CD8-positive, alpha-beta T cell (primary cell): ENCODE measurements at regions of chr12 and their contacts with region 1.

Region 1: DNA sequence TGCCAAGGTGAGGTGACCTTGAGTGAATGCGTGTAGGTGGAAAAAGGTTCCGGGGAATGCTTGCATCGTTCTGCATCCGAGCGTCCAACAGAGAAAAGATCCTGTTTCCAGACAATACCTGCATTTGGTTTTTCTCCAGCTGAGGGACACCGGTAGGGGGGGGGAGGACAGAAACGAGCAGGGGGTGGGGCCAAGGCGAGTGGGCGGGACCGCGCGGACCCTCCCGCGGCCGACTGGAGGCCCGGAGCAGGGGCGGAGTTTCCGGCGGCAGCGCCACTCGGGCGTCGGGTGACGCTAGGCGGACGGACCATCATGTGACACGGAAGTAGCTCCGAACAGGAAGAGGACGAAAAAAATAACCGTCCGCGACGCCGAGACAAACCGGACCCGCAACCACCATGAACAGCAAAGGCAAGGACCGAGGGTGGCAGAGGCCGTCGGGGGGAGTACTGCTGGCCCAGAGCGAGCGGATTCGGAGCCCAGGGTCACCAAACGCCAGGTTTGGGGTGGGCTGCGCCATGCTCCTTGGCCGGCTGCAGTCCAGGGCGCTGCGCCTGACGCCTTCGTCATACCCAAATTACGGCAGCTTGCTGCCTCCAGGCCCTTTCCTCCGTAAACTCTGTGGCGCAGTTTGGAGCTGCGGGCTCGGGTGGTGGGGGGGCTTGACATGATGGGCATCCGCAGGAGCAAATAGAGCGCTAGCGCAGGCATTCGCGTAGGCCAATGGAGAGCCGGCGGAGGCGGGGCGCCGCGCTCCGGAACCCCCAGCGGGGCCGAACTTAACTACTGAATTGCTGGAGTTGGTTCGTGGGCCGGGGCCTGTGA is at the start of gene DAZAP2:
- DNase-seq: peak; percentile 89 to 98 (median 96)
- ATAC-seq: peak; percentile 88
- H3K4me3 ChIP-seq: peak within 1 kb of the TSS; percentile 80 to 99
- H3K4me3 Mint-ChIP-seq: peak within 1 kb of the TSS; percentile 94
- H3K27ac ChIP-seq: peak within 1 kb of the TSS; percentile 97 to 100
- H3K27ac Mint-ChIP-seq: peak within 1 kb of the TSS; percentile 100
- H3K4me1 ChIP-seq: peaks cover 32% of the 10 kb centered on the region
- H3K4me1 Mint-ChIP-seq: peaks cover 45% of the 10 kb centered on the region
- H3K27me3 ChIP-seq: no peaks in the 10 kb centered on the region
- H3K27me3 Mint-ChIP-seq: no peaks in the 10 kb centered on the region
- CTCF ChIP-seq: no peak
- total RNA-seq, gene DAZAP2: 340 to 343 TPM

Region 2: DNA sequence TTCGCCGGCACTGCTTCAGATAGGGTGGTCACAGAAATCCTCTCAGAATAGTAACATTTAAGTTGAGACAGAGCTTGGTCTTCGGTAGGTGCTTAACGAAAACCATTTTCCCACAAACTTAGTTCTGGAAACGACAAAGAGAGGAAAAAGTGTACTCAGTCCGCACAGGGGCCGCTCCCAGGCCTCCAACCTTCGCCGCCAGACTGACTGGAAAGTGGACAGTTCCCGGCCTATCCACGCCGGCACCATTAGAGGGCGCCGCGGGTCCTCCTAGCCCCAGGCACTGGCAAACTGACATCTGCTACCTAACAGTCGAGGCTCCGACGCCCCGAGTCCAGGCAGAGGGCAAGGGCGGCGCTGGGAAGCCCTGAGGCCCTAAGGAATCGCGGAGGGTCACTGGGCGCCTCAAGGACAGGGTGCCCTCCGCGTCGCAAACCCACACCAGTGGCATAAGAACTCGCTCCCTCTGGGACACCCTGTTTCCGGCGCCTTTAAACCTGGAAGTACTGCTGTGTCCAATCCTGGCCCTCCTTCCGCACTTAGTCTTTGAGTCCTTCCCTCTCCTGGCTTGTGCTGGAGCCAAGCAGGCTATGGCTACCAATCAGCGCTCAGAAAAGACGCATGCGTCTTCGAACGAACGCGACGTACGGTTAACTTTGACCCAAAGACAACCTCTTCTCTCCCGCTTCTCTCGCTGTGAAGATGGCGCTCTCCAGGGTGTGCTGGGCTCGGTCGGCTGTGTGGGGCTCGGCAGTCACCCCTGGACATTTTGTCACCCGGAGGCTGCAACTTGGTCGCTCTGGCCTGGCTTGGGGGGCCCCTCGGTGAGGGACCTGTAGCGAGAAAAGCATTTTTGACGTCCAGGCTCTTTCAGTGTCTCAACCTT is 190.8 kb before region 1 on chr12 and contains the start of gene LETMD1:
- CTCF ChIA-PET with region 1: interaction called, 3 read pairs
- POLR2A ChIA-PET with region 1: no interaction called
- intact Hi-C with region 1: loop called (anchors 1 kb)
- DNase-seq: peak; percentile 83 to 99 (median 88)
- ATAC-seq: peak; percentile 94
- H3K4me3 ChIP-seq: peak within 1 kb of the TSS; percentile 79 to 83
- H3K4me3 Mint-ChIP-seq: peak within 1 kb of the TSS; percentile 98
- H3K27ac ChIP-seq: peak within 1 kb of the TSS; percentile 74 to 96
- H3K27ac Mint-ChIP-seq: peak within 1 kb of the TSS; percentile 97
- H3K4me1 ChIP-seq: peaks cover 23% of the 10 kb centered on the region
- H3K4me1 Mint-ChIP-seq: peaks cover 34% of the 10 kb centered on the region
- H3K27me3 ChIP-seq: no peaks in the 10 kb centered on the region
- H3K27me3 Mint-ChIP-seq: no peaks in the 10 kb centered on the region
- CTCF ChIP-seq: peak; percentile 95
- total RNA-seq, gene LETMD1: 51.3 to 55.2 TPM

Region 3: GRCh38 chr12:51083126-51083833 is 155.4 kb before region 1 on chr12 and contains the start of gene CSRNP2:
- CTCF ChIA-PET with region 1: no interaction called
- POLR2A ChIA-PET with region 1: interaction called, 5 read pairs
- intact Hi-C with region 1: loop called (anchors 1 kb)
- DNase-seq: peak; percentile 90 to 97 (median 94)
- ATAC-seq: peak; percentile 99
- H3K4me3 ChIP-seq: peak within 1 kb of the TSS; percentile 88
- H3K4me3 Mint-ChIP-seq: peak within 1 kb of the TSS; percentile 94
- H3K27ac ChIP-seq: peak within 1 kb of the TSS; percentile 61 to 62
- H3K27ac Mint-ChIP-seq: peak within 1 kb of the TSS; percentile 91
- H3K4me1 ChIP-seq: peaks cover 12% of the 10 kb centered on the region
- H3K4me1 Mint-ChIP-seq: peaks cover 36% of the 10 kb centered on the region
- H3K27me3 ChIP-seq: no peaks in the 10 kb centered on the region
- H3K27me3 Mint-ChIP-seq: no peaks in the 10 kb centered on the region
- CTCF ChIP-seq: no peak
- total RNA-seq, gene CSRNP2: 19.5 to 19.9 TPM

Region 4: GRCh38 chr12:51253276-51253675 is 14.6 kb after region 1 on chr12:
- CTCF ChIA-PET with region 1: interaction called, 7 read pairs
- POLR2A ChIA-PET with region 1: interaction called, 20 read pairs
- intact Hi-C with region 1: no loop called
- DNase-seq: no peak
- ATAC-seq: no peak
- H3K4me3 ChIP-seq: no peak overlapping the region
- H3K4me3 Mint-ChIP-seq: no peak overlapping the region
- H3K27ac ChIP-seq: no peak overlapping the region
- H3K27ac Mint-ChIP-seq: no peak overlapping the region
- H3K4me1 ChIP-seq: peaks cover 3% of the 10 kb centered on the region
- H3K4me1 Mint-ChIP-seq: peaks cover 8% of the 10 kb centered on the region
- H3K27me3 ChIP-seq: no peaks in the 10 kb centered on the region
- H3K27me3 Mint-ChIP-seq: no peaks in the 10 kb centered on the region
- CTCF ChIP-seq: no peak

Region 5: DNA sequence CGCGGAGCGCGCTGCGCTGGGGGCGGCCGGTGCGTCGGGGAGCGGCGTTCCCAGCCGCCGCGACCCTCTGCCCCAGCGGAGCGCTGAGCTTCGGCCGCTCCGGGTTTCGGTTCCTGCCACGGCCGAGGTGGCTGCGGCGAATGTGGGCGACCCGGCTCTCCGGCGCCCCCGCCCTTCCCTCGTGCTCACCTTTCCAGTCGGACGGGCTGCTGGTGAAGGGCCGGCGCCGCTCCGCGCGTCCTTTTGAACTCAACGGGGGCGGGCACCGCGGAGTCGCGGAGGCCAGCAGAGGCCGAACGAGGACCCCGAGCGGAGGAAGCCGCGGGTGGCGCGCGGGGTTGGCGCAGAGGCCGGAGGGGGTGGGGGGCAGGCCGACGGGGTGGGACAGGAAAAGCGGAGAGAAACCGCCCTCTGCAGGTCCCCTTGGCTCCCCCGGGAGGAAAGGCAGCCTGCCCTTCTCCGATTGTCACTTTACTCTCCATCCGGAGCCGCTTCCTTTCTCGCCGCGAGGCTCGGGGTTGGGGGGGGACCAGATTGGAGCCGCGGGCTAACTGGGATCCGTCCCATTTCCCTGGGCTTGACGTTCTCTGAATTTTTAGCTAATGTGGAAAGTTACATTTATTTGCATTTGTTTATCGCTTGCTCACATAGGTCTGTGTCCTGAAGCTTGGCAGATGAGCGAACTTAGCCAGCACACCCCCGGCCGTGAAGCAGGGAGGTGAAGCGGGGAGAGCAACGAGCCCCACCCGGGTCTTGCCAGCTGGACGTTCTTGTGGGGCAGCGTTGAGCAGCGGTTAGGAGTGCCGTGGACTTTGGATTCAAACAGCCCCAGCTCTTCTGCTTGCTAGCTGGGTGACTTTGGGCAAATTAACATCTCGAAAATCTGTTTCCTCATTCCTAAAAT is 31.6 kb after region 1 on chr12 and contains the start of gene SMAGP:
- CTCF ChIA-PET with region 1: no interaction called
- POLR2A ChIA-PET with region 1: interaction called, 7 read pairs
- intact Hi-C with region 1: loop called in 1 of 2 experiments (anchors 2 kb)
- DNase-seq: peak in 8 of 9 experiments; percentile 28 to 76 (median 52)
- ATAC-seq: peak; percentile 50
- H3K4me3 ChIP-seq: peak within 1 kb of the TSS; percentile 54 to 71
- H3K4me3 Mint-ChIP-seq: peak within 1 kb of the TSS; percentile 90
- H3K27ac ChIP-seq: peak within 1 kb of the TSS; percentile 42 to 58
- H3K27ac Mint-ChIP-seq: peak within 1 kb of the TSS; percentile 84
- H3K4me1 ChIP-seq: peaks cover 16% of the 10 kb centered on the region
- H3K4me1 Mint-ChIP-seq: peaks cover 23% of the 10 kb centered on the region
- H3K27me3 ChIP-seq: no peaks in the 10 kb centered on the region
- H3K27me3 Mint-ChIP-seq: no peaks in the 10 kb centered on the region
- CTCF ChIP-seq: no peak
- total RNA-seq, gene SMAGP: 1.9 to 2.3 TPM

Region 6: DNA sequence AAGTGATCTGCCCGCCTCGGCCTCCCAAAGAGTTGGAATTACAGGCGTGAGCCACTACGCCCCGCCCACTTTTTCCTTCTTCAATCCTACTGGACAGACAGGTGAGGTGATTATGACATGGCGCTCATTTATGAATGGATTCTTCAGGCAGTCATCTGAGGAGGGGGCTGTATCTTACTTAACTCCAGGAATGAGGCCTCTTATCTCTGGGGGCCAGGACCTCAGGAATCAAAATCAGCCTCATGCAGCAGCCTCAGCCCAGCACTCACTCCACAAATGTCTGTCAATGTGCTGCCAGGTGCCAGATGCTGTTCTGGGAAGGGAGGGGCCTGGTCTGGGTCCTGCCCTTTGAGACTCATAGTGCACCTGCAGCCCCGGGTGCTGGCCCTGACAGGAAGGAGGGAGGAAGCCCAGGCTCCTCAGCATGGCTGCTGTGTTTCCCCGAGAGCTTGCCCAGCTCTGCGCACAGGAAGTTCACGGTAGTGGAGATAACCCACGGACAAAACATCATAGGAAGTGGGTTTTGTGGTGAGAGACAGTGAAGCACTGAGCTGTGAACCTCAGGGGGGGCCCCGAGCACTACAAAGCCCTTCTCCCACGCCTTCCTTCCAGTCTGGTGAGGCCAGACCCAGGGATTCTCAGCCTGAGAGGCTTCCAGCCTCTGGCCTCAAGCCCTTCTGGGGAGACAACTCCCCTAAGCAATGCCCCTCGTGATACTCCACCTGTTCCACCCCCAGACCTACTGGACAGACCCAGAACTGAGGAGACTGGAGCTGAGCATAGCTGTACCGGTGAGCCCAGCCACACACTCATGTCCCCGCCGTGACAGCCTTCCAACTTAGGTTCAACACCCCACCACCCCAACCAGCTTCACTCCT is 130.2 kb after region 1 on chr12:
- CTCF ChIA-PET with region 1: interaction called, 3 read pairs
- POLR2A ChIA-PET with region 1: interaction called, 8 read pairs
- intact Hi-C with region 1: loop called in 1 of 2 experiments (anchors 1 kb)
- DNase-seq: peak; percentile 78 to 98 (median 88)
- ATAC-seq: peak; percentile 93
- H3K4me3 ChIP-seq: peak overlapping the region; percentile 38 to 49
- H3K4me3 Mint-ChIP-seq: peak overlapping the region; percentile 63
- H3K27ac ChIP-seq: peak overlapping the region; percentile 32 to 66
- H3K27ac Mint-ChIP-seq: peak overlapping the region; percentile 75
- H3K4me1 ChIP-seq: peaks cover 36% of the 10 kb centered on the region
- H3K4me1 Mint-ChIP-seq: peaks cover 49% of the 10 kb centered on the region
- H3K27me3 ChIP-seq: no peaks in the 10 kb centered on the region
- H3K27me3 Mint-ChIP-seq: no peaks in the 10 kb centered on the region
- CTCF ChIP-seq: no peak